ENCODE measurements at regions of chr4 and their contacts with region 1.

Region 1: DNA sequence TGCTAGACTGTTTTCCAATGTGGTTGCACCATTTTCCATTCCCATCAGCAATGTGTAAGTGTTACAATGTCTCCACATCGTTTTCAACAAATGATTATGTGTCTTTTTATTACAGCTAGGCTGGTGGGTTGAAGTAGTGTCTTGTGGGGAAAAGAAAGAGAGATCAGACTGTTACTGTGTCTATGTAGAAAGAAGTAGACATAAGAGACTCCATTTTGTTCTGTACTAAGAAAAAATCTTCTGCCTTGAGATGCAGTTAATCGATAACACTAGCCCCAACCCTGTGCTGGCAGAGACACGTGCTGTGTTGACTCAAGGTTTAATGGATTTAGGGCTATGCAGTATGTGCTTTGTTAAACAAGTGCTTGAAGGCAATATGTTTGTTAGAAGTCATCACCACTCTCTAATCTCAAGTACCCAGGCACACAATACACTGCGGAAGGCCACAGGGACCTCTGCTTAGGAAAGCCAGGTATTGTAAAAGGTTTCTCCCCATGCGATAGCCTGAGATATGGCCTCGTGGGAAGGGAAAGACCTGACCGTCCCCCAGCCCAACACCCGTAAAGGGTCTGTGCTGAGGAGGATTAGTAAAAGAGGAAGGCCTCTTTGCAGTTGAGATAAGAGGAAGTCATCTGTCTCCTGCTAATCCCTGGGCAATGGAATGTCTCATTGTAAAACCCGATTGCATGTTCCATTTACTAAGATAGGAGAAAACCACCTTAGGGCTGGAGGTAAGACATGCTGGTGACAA is 23.0 kb upstream of the UGT2B15 start:
- DNase-seq: no peak
- ATAC-seq: no peak
- H3K4me3 ChIP-seq: no peak overlapping the region
- H3K27ac ChIP-seq: no peak overlapping the region
- H3K4me1 ChIP-seq: no peaks in the 10 kb centered on the region
- H3K27me3 ChIP-seq: no peaks in the 10 kb centered on the region
- CTCF ChIP-seq: no peak
- EP300 ChIP-seq: no peak
- POLR2A ChIP-seq: no peak
- RAD21 ChIP-seq: no peak

Region 2: GRCh38 chr4:68576272-68577100 is 117.0 kb before region 1 on chr4 and contains the start of gene UGT2B17:
- CTCF ChIA-PET with region 1: no interaction called
- POLR2A ChIA-PET with region 1: no interaction called
- RAD21 ChIA-PET with region 1: no interaction called
- SMC1A ChIA-PET with region 1: no interaction called
- in situ Hi-C with region 1: loop called (anchors 25 kb)
- intact Hi-C with region 1: no loop called
- DNase-seq: no peak
- ATAC-seq: no peak
- H3K4me3 ChIP-seq: no peak within 1 kb of the TSS
- H3K27ac ChIP-seq: no peak within 1 kb of the TSS
- H3K4me1 ChIP-seq: no peaks in the 10 kb centered on the region
- H3K27me3 ChIP-seq: no peaks in the 10 kb centered on the region
- CTCF ChIP-seq: no peak
- EP300 ChIP-seq: no peak
- POLR2A ChIP-seq: no peak
- RAD21 ChIP-seq: no peak
- polyA plus RNA-seq, gene UGT2B17: not detected

Measured in GM12878 (cell line).